GM13977 (cell line): ENCODE measurements at regions of chr18 and their contacts with region 1.

Region 1: DNA sequence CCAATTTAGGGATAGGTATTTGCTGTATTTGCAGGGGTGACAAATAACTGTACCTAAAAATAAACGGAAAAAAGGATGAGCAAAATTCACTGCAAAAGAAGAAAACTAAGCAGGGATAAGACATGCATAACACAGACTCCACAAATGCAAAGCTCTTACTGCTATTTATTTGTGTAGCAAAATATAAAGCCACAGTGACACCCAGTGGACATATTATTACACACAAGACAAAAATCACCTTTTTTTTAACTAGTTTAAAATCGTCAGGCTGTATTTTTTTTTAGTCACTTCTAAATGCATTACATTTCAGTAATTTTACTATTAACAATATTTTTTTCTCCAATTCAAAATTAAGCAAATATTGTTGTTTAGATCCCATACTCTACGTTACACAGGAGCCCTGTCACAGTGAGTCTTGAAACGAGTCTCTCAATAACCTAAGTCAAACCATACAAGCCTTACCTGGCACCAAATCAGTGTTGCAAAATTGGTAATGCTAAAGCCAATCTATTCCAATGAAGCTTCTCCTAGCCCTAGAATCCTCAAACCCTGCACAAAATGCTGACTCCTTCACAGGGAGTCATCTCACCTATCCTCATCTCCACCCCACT is 23.7 kb downstream of the METTL4 start:
- DNase-seq: peak; percentile 42
- CTCF ChIP-seq: peak; percentile 56

Region 2: GRCh38 chr18:2104620-2105462 is 442.7 kb before region 1 on chr18:
- in situ Hi-C with region 1: loop called (anchors 25 kb)
- DNase-seq: peak; percentile 49
- CTCF ChIP-seq: peak; percentile 91

Region 3: DNA sequence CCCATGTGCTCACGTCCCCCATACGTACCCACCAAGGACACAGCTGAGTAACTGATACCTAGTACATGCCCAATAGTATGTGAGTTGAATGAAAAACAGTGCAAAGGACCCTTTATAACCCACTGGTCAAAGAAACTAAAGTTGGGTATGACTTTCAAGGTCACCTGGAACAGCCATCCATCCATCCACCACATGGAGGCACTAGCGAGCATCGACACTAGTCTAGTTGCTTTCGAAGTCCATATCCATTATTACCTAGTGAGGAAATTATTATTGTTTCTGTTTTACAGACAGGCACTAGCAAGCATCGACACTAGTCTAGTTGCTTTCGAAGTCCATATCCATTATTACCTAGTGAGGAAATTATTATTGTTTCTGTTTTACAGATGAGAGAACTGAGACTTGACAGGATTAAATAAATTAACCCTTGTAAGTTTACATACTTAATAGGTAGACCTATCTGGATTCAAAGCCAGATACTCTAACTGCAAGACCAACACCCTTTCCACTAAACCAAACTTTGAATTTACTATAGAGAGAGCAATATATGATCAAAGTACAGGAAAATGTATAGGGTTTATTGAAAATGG is 209.9 kb before region 1 on chr18:
- in situ Hi-C with region 1: loop called (anchors 25 kb)
- DNase-seq: peak; percentile 47
- CTCF ChIP-seq: peak; percentile 71

Region 4: DNA sequence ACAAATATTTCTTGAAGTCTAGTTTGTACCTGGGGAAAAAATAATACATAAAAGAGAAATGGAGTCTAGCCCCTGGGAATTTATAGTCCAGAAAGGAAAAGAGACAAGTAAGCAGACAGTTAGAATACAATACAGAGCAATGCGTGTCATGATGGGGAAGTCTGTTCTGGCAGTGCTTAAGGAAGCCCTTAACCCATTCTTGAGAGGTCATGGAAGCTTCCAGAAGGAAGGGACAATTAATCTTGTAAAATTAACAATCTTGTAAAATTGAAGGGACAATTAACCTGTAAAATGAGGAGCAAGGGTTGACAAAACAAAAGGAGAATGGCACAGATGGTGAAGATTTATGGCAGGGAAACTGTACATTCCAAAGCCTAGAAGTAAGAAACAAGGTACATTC is 42.9 kb before region 1 on chr18:
- in situ Hi-C with region 1: no loop called
- DNase-seq: no peak
- CTCF ChIP-seq: no peak

Region 5: DNA sequence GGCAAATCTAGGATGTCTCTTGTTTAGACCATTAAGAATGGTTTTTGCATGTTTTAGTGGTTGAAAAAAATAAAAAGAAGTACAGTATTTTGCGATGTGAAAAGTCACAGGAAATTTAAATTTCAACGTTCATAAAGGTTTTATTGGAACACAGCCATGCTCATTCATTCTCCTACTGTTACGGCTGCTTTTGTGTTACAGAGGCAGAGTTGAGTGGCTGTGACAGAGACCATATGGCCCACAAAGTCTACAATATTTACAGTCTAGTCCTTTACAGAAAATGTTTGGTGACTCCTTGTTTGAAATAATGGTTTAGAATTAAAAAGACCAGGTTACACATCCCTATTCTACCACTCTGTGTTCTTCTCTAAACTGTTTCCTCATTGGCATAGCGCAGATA is 624.0 kb after region 1 on chr18:
- in situ Hi-C with region 1: no loop called
- DNase-seq: no peak
- CTCF ChIP-seq: no peak